Calu3 (cell line): ENCODE measurements at regions of chr15 and their contacts with region 1.

Region 1: GRCh38 chr15:84035399-84035766 is 200.2 kb upstream of the GOLGA6L4 start:
- DNase-seq: no peak
- H3K4me3 Mint-ChIP-seq: no peak overlapping the region
- H3K27ac Mint-ChIP-seq: no peak overlapping the region
- H3K4me1 Mint-ChIP-seq: peaks cover 12% of the 10 kb centered on the region
- H3K27me3 Mint-ChIP-seq: peaks cover 10% of the 10 kb centered on the region
- CTCF ChIP-seq: peak; percentile 36

Region 2: DNA sequence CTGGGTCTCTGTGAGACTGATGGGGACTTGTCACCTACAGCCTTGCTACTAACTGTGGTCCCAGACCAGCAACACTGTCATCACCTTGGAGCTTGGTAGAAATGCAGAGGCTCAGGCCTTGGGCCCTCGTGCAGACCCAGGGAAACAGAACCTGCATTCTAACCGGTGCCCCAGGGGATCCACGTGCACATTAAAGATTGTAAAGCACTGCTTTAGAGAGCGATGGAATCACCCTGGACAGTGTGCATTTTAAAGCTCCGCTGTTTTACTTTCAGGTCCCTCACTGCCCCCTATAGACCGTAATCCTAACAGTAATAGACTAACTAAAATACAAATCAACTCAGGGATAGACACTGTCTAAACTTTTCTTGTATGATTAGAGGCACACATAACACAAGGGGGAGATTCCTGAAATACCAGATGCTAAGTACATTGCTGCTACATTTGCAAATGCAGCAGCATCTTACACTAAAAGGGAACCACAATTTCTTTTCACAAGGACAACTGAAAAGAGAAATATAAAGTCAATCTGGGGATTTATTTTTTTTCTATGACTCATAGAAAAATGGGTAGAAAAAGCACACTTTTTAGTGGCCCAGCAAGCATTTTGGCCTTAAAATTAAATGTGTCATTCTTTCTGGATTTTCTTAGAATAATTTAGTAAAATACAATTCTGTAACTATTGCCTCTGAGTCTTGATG is 598.8 kb before region 1 on chr15:
- CTCF ChIA-PET with region 1: no interaction called
- intact Hi-C with region 1: loop called (anchors 5 kb)
- DNase-seq: peak; percentile 25
- H3K4me3 Mint-ChIP-seq: no peak overlapping the region
- H3K27ac Mint-ChIP-seq: no peak overlapping the region
- H3K4me1 Mint-ChIP-seq: no peaks in the 10 kb centered on the region
- H3K27me3 Mint-ChIP-seq: peaks cover 51% of the 10 kb centered on the region
- CTCF ChIP-seq: peak; percentile 52

Region 3: GRCh38 chr15:83567318-83567717 is 468.1 kb before region 1 on chr15:
- CTCF ChIA-PET with region 1: interaction called, 10 read pairs
- intact Hi-C with region 1: loop called (anchors 1 kb)
- DNase-seq: no peak
- H3K4me3 Mint-ChIP-seq: no peak overlapping the region
- H3K27ac Mint-ChIP-seq: no peak overlapping the region
- H3K4me1 Mint-ChIP-seq: no peaks in the 10 kb centered on the region
- H3K27me3 Mint-ChIP-seq: no peaks in the 10 kb centered on the region
- CTCF ChIP-seq: no peak

Region 4: GRCh38 chr15:83653639-83654378 is 381.6 kb before region 1 on chr15 and contains the start of gene ADAMTSL3:
- CTCF ChIA-PET with region 1: no interaction called
- intact Hi-C with region 1: loop called (anchors 10 kb)
- DNase-seq: peak; percentile 83
- H3K4me3 Mint-ChIP-seq: peak within 1 kb of the TSS; percentile 48
- H3K27ac Mint-ChIP-seq: no peak within 1 kb of the TSS
- H3K4me1 Mint-ChIP-seq: peaks cover 13% of the 10 kb centered on the region
- H3K27me3 Mint-ChIP-seq: peaks cover 43% of the 10 kb centered on the region
- CTCF ChIP-seq: no peak
- total RNA-seq, gene ADAMTSL3: 1.1 and 2.4 TPM in 2 replicates

Region 5: GRCh38 chr15:83734487-83734886 is 300.9 kb before region 1 on chr15:
- CTCF ChIA-PET with region 1: interaction called, 3 read pairs
- intact Hi-C with region 1: loop called (anchors 1 kb)
- DNase-seq: peak; percentile 63
- H3K4me3 Mint-ChIP-seq: no peak overlapping the region
- H3K27ac Mint-ChIP-seq: no peak overlapping the region
- H3K4me1 Mint-ChIP-seq: peaks cover 26% of the 10 kb centered on the region
- H3K27me3 Mint-ChIP-seq: no peaks in the 10 kb centered on the region
- CTCF ChIP-seq: peak; percentile 40

Region 6: DNA sequence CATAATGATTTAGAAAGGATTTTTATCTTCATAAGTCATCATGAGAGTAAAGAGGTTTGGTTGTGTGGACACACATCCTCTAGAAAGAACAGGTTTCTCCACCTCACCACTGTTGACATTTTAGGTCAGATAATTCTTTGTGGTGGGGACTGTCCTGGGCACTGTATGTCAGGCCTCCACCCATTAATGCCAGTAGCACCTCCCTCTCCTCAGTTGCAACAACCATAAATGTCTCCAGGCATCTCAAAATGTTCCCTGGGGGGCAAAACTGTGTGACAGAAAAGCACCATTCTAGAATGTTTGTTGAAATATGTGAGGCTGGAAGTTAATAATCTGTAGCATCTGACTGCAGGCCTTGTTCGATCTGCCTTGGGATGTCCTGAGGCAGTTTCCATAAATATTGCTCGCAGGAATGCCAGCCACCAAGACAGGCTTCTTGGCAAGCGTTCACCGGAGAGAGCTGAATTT is 281.4 kb before region 1 on chr15:
- CTCF ChIA-PET with region 1: no interaction called
- intact Hi-C with region 1: loop called (anchors 5 kb)
- DNase-seq: peak; percentile 51
- H3K4me3 Mint-ChIP-seq: no peak overlapping the region
- H3K27ac Mint-ChIP-seq: peak overlapping the region; percentile 57
- H3K4me1 Mint-ChIP-seq: peaks cover 30% of the 10 kb centered on the region
- H3K27me3 Mint-ChIP-seq: no peaks in the 10 kb centered on the region
- CTCF ChIP-seq: no peak

Region 7: GRCh38 chr15:83837945-83838571 is 197.3 kb before region 1 on chr15:
- CTCF ChIA-PET with region 1: interaction called, 5 read pairs
- intact Hi-C with region 1: loop called (anchors 5 kb)
- DNase-seq: peak; percentile 74
- H3K4me3 Mint-ChIP-seq: no peak overlapping the region
- H3K27ac Mint-ChIP-seq: no peak overlapping the region
- H3K4me1 Mint-ChIP-seq: peaks cover 11% of the 10 kb centered on the region
- H3K27me3 Mint-ChIP-seq: peaks cover 12% of the 10 kb centered on the region
- CTCF ChIP-seq: peak; percentile 67

Region 8: DNA sequence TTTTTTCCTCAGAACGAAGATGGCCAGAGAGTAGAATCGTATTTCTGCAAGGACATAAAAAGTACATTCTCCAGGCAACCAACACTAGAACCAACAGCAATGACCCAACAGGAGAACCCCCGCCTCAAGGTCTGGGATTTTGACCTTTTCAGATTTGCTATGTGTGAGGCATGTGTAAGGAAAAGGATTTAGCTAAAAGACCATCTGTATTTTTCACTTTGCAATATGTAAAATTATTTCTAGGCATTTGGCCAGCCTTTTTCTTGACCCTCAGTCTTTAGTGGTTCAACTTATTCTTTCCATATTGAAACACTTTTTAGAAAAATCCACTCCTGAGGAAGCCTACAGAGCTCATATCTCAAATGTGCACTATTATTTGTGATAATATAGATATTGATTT is 19.0 kb before region 1 on chr15:
- CTCF ChIA-PET with region 1: no interaction called
- intact Hi-C with region 1: no loop called
- DNase-seq: no peak
- H3K4me3 Mint-ChIP-seq: no peak overlapping the region
- H3K27ac Mint-ChIP-seq: no peak overlapping the region
- H3K4me1 Mint-ChIP-seq: no peaks in the 10 kb centered on the region
- H3K27me3 Mint-ChIP-seq: no peaks in the 10 kb centered on the region
- CTCF ChIP-seq: no peak

Region 9: GRCh38 chr15:84099181-84099580 is 63.8 kb after region 1 on chr15:
- CTCF ChIA-PET with region 1: no interaction called
- intact Hi-C with region 1: no loop called
- DNase-seq: peak; percentile 20
- H3K4me3 Mint-ChIP-seq: no peak overlapping the region
- H3K27ac Mint-ChIP-seq: no peak overlapping the region
- H3K4me1 Mint-ChIP-seq: no peaks in the 10 kb centered on the region
- H3K27me3 Mint-ChIP-seq: peaks cover 12% of the 10 kb centered on the region
- CTCF ChIP-seq: no peak

Region 10: GRCh38 chr15:84783496-84784251 is 748.3 kb after region 1 on chr15:
- CTCF ChIA-PET with region 1: no interaction called
- intact Hi-C with region 1: no loop called
- DNase-seq: no peak
- H3K4me3 Mint-ChIP-seq: no peak overlapping the region
- H3K27ac Mint-ChIP-seq: no peak overlapping the region
- H3K4me1 Mint-ChIP-seq: peaks cover 8% of the 10 kb centered on the region
- H3K27me3 Mint-ChIP-seq: no peaks in the 10 kb centered on the region
- CTCF ChIP-seq: no peak